Naive thymus-derived CD4-positive, alpha-beta T cell (primary cell): ENCODE measurements at regions of chr11 and their contacts with region 1.

Region 1: DNA sequence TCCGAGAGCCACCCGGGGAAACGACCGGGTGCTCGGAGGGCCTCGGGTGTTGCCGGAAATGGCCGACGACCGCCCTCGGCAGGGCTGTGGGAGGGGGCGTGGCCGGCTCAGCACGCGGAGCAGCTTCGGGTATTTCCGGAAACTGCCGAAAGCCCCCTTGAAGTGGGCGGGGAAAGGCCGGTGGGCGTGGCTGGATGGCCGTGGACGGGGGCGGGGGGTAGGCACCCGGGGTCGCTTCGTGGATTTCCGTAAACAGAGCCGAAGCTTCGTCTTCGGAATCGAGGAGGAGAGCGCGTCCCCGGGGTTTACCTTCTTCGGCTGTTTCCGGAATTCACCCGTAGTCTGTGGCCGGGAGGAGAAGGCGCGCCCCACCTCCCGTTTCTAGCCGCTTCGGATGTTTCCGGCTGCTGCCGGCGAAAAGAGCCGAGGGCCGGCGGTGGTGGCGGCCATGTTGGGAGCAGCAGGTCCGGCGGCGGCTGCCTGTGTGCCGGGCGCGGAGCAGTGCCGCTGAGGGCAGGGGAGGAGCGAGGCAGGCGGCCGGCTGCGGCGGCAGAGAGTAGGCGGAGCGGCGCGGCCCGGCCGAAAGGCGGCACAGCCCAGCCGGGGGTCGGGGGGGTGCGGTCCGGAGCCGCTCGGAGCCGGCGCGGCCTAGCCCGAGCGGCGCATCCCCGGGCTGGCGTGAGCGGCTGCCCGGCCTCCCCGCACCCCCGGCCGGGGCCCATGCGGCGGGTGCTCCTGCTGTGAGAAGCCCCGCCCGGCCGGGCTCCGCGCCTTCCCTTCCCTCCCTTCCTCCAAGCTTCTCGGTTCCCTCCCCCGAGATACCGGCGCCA is at the start of gene MARK2:
- DNase-seq: peak; percentile 99 to 100 (median 99)
- ATAC-seq: peak; percentile 93
- H3K4me3 ChIP-seq: peak within 1 kb of the TSS; percentile 87
- H3K4me3 Mint-ChIP-seq: peak within 1 kb of the TSS; percentile 86 to 99 (median 92)
- H3K27ac ChIP-seq: peak within 1 kb of the TSS; percentile 94
- H3K27ac Mint-ChIP-seq: peak within 1 kb of the TSS; percentile 74 to 97 (median 88)
- H3K4me1 ChIP-seq: peaks cover 32 to 35% of the 10 kb centered on the region in 2 donors
- H3K4me1 Mint-ChIP-seq: peaks cover 44 to 57% (median 54%) of the 10 kb centered on the region in 7 donors
- H3K27me3 ChIP-seq: no peaks in the 10 kb centered on the region
- H3K27me3 Mint-ChIP-seq: no peaks in the 10 kb centered on the region
- total RNA-seq, gene MARK2: 42.3 to 69.1 (median 56.8) TPM

Region 2: DNA sequence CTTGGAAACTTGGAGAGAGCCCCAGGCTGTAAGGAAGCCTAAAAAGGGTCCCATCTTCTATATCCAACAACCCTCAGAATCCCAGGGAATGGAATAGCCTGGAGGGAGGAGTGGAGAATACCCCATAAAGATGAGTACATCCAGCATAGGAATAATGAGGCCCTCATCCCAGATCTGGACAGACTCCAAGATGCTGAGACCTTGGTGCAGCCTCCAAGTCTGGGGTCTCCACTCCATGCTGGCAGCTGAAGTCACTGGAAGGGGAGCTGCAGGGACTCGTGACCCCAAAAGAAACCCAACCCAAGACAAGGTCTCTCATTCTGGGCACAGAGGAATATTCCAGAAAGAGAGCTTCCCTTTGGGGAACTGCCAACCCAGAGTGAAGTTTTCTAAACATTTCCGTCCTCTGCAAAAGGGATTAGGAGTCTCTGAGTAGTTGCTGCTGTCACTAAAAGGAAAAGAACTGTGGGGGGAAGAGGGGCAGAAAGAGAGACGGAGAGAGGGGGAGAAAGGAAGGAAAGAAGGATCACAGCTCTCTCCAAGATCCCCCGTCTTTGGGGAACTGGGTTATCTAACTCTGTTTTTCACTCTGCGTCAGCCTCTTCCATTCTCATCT is 1419.5 kb before region 1 on chr11:
- CTCF ChIA-PET with region 1: no interaction called
- POLR2A ChIA-PET with region 1: no interaction called
- intact Hi-C with region 1: no loop called
- DNase-seq: no peak
- ATAC-seq: no peak
- H3K4me3 ChIP-seq: no peak overlapping the region
- H3K4me3 Mint-ChIP-seq: no peak overlapping the region
- H3K27ac ChIP-seq: no peak overlapping the region
- H3K27ac Mint-ChIP-seq: no peak overlapping the region
- H3K4me1 ChIP-seq: peaks cover 0 to under 1% of the 10 kb centered on the region in 2 donors
- H3K4me1 Mint-ChIP-seq: peaks cover 0 to 6% (median 3%) of the 10 kb centered on the region in 7 donors
- H3K27me3 ChIP-seq: no peaks in the 10 kb centered on the region
- H3K27me3 Mint-ChIP-seq: peaks cover 0 to 7% (median 0%) of the 10 kb centered on the region in 5 donors

Region 3: DNA sequence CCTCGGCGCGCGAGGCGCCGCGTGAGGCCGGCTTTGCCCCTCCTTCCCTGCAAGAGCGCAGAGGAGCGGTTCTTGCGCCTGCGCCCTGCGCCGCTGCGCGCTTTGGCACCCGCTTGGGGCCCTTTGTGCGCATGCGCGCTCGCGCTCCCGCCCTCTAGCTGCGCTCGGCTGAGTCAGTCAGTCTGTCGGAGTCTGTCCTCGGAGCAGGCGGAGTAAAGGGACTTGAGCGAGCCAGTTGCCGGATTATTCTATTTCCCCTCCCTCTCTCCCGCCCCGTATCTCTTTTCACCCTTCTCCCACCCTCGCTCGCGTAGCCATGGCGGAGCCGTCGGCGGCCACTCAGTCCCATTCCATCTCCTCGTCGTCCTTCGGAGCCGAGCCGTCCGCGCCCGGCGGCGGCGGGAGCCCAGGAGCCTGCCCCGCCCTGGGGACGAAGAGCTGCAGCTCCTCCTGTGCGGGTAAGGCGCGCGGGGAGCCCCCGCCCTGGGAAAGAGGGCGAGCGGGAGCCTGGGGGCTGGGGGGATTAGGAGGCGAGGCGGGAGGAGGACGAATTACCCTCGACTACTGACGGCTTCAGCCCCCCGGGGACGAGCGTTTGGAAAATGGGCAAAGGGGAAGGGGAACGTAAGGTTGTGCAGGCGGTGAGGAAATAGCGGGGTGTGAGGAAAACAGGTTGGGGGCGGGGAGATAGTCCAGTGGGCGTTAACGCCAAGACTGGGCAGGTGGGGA is 157.4 kb before region 1 on chr11 and contains the start of gene RTN3:
- CTCF ChIA-PET with region 1: no interaction called
- POLR2A ChIA-PET with region 1: no interaction called
- intact Hi-C with region 1: loop called in 1 of 2 experiments (anchors 2 kb)
- DNase-seq: peak; percentile 97 to 99 (median 98)
- ATAC-seq: peak; percentile 95
- H3K4me3 ChIP-seq: peak within 1 kb of the TSS; percentile 86
- H3K4me3 Mint-ChIP-seq: peak within 1 kb of the TSS; percentile 89 to 97 (median 94)
- H3K27ac ChIP-seq: peak within 1 kb of the TSS; percentile 69
- H3K27ac Mint-ChIP-seq: peak within 1 kb of the TSS; percentile 50 to 97 (median 83)
- H3K4me1 ChIP-seq: peaks cover 6 to 17% of the 10 kb centered on the region in 2 donors
- H3K4me1 Mint-ChIP-seq: peaks cover 20 to 30% (median 27%) of the 10 kb centered on the region in 7 donors
- H3K27me3 ChIP-seq: no peaks in the 10 kb centered on the region
- H3K27me3 Mint-ChIP-seq: peaks cover 0 to 12% (median 0%) of the 10 kb centered on the region in 5 donors
- total RNA-seq, gene RTN3: 20.8 to 65.7 (median 34.4) TPM

Region 4: GRCh38 chr11:63866211-63866610 is 27.3 kb after region 1 on chr11:
- CTCF ChIA-PET with region 1: interaction called, 9 read pairs
- POLR2A ChIA-PET with region 1: interaction called, 12 read pairs
- intact Hi-C with region 1: loop called (anchors 1 kb)
- DNase-seq: peak; percentile 29 to 87 (median 80)
- ATAC-seq: peak; percentile 83
- H3K4me3 ChIP-seq: no peak overlapping the region
- H3K4me3 Mint-ChIP-seq: peak overlapping the region; percentile 56 to 81 (median 75)
- H3K27ac ChIP-seq: peak overlapping the region; percentile 22
- H3K27ac Mint-ChIP-seq: peak overlapping the region; percentile 63 to 94 (median 83)
- H3K4me1 ChIP-seq: peaks cover 73% of the 10 kb centered on the region in 2 donors
- H3K4me1 Mint-ChIP-seq: peaks cover 69 to 85% (median 75%) of the 10 kb centered on the region in 7 donors
- H3K27me3 ChIP-seq: no peaks in the 10 kb centered on the region
- H3K27me3 Mint-ChIP-seq: no peaks in the 10 kb centered on the region

Region 5: DNA sequence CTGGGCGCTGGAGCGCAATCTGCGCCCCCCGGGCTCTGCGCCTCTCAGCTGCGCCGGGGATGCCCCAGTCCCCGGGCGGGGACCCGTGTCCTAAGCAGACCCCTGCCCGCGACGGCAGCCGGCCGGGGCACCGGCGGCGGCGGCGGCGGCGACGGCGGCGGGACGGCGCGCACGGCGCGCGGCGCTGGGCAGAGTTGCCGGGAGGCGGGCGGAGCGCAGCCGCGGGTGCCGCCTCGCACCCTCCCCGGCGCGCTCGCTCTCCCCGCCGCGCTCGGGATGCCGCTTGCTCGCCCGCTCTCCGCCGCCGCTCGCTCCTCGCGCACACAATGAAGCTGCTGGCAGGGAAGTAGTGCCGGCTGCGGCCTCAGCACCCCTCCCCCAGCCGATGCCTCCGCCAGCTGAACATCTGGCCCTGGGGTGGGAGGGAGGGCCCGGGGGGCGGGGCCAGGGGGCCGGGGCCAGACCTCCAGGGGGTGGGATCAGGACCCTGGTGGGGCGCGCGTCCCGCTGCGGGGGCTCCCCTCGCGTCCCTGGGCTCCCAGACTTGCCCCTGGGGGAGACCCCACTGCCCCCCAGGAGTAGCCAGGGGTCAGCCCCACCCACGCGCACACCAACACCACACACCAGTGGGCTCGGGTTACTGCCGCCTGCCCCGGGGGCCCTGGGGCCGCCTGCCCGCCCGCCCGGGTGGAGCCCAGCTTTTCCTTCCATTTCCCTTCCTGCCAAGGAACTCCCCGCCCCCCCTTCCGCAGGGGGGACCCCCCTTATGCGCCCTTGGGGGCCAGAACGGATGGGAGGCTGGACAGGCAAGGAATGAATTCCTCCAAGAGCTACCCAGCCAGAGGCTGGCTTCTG is 78.2 kb after region 1 on chr11 and contains the start of gene RCOR2:
- CTCF ChIA-PET with region 1: interaction called, 26 read pairs
- POLR2A ChIA-PET with region 1: interaction called, 6 read pairs
- intact Hi-C with region 1: loop called (anchors 1 to 2 kb)
- DNase-seq: peak; percentile 26 to 62 (median 54)
- ATAC-seq: peak; percentile 69
- H3K4me3 ChIP-seq: peak within 1 kb of the TSS; percentile 62
- H3K4me3 Mint-ChIP-seq: peak within 1 kb of the TSS; percentile 73 to 91 (median 83)
- H3K27ac ChIP-seq: no peak within 1 kb of the TSS
- H3K27ac Mint-ChIP-seq: peak within 1 kb of the TSS in 3 of 9 donors; percentile 36 to 64 (median 42)
- H3K4me1 ChIP-seq: peaks cover 8 to 20% of the 10 kb centered on the region in 2 donors
- H3K4me1 Mint-ChIP-seq: peaks cover 0 to 18% (median 15%) of the 10 kb centered on the region in 7 donors
- H3K27me3 ChIP-seq: no peaks in the 10 kb centered on the region
- H3K27me3 Mint-ChIP-seq: peaks cover 0 to 22% (median 0%) of the 10 kb centered on the region in 5 donors
- total RNA-seq, gene RCOR2: 0.07 TPM in 1 of 5 experiments, not detected in the others

Region 6: GRCh38 chr11:63974259-63975143 is 135.6 kb after region 1 on chr11 and contains the start of gene COX8A:
- CTCF ChIA-PET with region 1: interaction called, 3 read pairs
- POLR2A ChIA-PET with region 1: interaction called, 3 read pairs
- intact Hi-C with region 1: loop called (anchors 1 kb)
- DNase-seq: peak; percentile 65 to 97 (median 94)
- ATAC-seq: peak; percentile 99
- H3K4me3 ChIP-seq: peak within 1 kb of the TSS; percentile 87
- H3K4me3 Mint-ChIP-seq: peak within 1 kb of the TSS; percentile 98 to 100 (median 99)
- H3K27ac ChIP-seq: peak within 1 kb of the TSS; percentile 94
- H3K27ac Mint-ChIP-seq: peak within 1 kb of the TSS; percentile 94 to 99 (median 99)
- H3K4me1 ChIP-seq: peaks cover 10 to 11% of the 10 kb centered on the region in 2 donors
- H3K4me1 Mint-ChIP-seq: peaks cover 12 to 36% (median 29%) of the 10 kb centered on the region in 7 donors
- H3K27me3 ChIP-seq: no peaks in the 10 kb centered on the region
- H3K27me3 Mint-ChIP-seq: peaks cover 0 to 2% (median 0%) of the 10 kb centered on the region in 5 donors
- total RNA-seq, gene COX8A: 90.9 to 363 (median 105) TPM

Region 7: DNA sequence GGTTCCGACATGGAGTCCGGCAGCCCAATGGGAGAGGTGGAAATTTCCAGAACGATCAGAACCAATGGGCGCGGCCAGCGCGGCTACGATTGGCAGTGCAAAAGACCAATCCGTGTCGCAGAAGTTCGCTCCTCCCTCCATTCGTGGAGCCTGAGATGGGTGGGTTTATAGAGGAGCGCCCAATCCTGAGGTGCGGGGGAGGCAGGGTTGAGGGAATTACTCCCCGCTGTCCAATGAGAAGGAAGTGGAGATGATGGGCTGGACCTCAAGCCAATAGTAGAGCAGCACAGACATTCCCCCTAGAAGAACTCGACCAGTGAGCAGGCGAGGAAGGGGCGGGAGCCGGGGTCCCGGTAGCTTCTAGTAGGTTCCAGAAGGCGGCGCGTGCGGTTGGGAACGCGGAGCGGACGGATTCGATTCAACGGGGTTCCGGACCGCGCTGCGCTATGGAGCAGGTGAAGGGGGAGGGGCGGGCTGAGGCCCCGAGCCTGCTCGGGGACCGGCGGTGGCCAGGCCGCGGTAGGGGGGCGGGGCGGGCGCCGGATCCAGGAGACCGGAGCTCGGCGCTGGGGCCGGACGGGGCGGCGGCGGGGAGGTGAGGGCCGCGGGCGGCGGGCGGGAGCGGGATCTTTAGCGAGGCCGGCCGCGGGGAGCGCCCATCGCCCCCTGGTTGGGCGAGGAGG is 347.1 kb after region 1 on chr11 and contains the start of gene STIP1:
- CTCF ChIA-PET with region 1: no interaction called
- POLR2A ChIA-PET with region 1: no interaction called
- intact Hi-C with region 1: loop called in 1 of 2 experiments (anchors 1 kb)
- DNase-seq: peak; percentile 87 to 100 (median 99)
- ATAC-seq: peak; percentile 92
- H3K4me3 ChIP-seq: peak within 1 kb of the TSS; percentile 84
- H3K4me3 Mint-ChIP-seq: peak within 1 kb of the TSS in 9 of 10 donors; percentile 88 to 99 (median 96)
- H3K27ac ChIP-seq: peak within 1 kb of the TSS; percentile 82
- H3K27ac Mint-ChIP-seq: peak within 1 kb of the TSS in 7 of 9 donors; percentile 89 to 99 (median 92)
- H3K4me1 ChIP-seq: peaks cover 11 to 28% of the 10 kb centered on the region in 2 donors
- H3K4me1 Mint-ChIP-seq: peaks cover 19 to 58% (median 46%) of the 10 kb centered on the region in 7 donors
- H3K27me3 ChIP-seq: no peaks in the 10 kb centered on the region
- H3K27me3 Mint-ChIP-seq: peaks cover 0 to 6% (median 0%) of the 10 kb centered on the region in 5 donors
- total RNA-seq, gene STIP1: 45.1 to 243 (median 88.8) TPM